Ascending aorta (tissue), 2 donors: ENCODE measurements at regions of chr7 and their contacts with region 1.

Region 1: GRCh38 chr7:50711257-50712175 is 71.2 kb downstream of the GRB10 start:
- DNase-seq: no peak
- H3K4me3 ChIP-seq: no peak overlapping the region
- H3K27ac ChIP-seq: peak overlapping the region; percentile 60 to 72
- H3K4me1 ChIP-seq: peaks cover 4 to 50% of the 10 kb centered on the region in 2 donors
- H3K27me3 ChIP-seq: no peaks in the 10 kb centered on the region
- CTCF ChIP-seq: no peak

Region 2: GRCh38 chr7:50665417-50666123 is 45.9 kb before region 1 on chr7:
- intact Hi-C with region 1: loop called (anchors 5 kb)
- DNase-seq: peak in 1 of 2 donors; percentile 83
- H3K4me3 ChIP-seq: no peak overlapping the region
- H3K27ac ChIP-seq: peak overlapping the region; percentile 85 to 93
- H3K4me1 ChIP-seq: peaks cover 16 to 55% of the 10 kb centered on the region in 2 donors
- H3K27me3 ChIP-seq: no peaks in the 10 kb centered on the region
- CTCF ChIP-seq: no peak